Activated CD4-positive, alpha-beta T cell treated with anti-CD3 and anti-CD28 coated beads, Interleukin-2, amount 10 ng/mL, durations not matched to agents 24 days and 14 days (primary cell): ENCODE measurements at regions of chr7 and their contacts with region 1.

Region 1: DNA sequence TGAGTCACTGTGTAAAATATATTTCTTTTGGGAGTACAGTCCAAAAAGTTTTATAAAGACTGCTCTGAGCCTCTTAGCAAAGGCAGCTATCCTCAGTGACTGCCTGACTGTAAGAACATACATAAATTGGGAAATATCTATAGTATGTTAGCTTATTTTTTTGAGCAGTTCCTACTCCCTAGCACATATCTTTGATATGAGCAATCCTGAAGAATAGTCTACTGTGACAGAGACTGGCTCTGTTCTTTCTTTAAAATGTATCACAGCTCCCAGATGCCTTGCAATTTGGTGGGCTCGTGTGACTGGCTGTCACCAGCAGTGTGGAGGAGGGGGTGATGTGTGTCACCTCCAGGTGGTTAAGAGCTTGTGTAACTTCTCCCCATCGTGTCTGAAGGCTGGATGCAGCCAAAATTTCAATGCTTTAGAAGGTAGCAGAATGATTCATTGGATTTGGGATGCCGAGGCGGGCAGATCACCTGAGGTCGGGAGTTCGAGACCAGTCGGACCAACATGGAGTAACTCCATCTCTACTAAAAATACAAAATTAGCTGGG is 47.9 kb downstream of the MTERF1 start:
- DNase-seq: no peak
- H3K4me3 Mint-ChIP-seq: no peak overlapping the region
- H3K27ac Mint-ChIP-seq: no peak overlapping the region
- H3K4me1 Mint-ChIP-seq: peaks cover 2% of the 10 kb centered on the region
- H3K27me3 Mint-ChIP-seq: no peaks in the 10 kb centered on the region

Region 2: DNA sequence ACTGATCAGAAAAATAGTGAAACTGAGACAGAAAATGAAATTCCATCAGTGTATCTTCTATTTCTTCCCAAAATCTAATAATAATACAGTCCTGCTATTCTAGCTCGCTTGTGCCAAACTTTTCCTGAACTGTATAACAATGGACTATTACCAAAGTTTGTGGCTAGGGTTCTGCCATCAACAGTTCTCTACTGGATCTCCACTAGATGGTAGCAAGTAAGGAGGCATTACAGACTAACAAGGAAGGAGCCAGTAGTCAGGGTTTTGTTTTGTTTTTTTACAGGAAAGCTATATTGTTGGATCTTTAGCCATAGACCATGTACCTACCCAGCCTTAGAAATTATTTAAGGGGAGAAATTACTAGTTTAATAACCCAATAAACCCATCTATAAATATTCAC is 37.1 kb after region 1 on chr7:
- intact Hi-C with region 1: no loop called
- DNase-seq: no peak
- H3K4me3 Mint-ChIP-seq: no peak overlapping the region
- H3K27ac Mint-ChIP-seq: no peak overlapping the region
- H3K4me1 Mint-ChIP-seq: no peaks in the 10 kb centered on the region
- H3K27me3 Mint-ChIP-seq: no peaks in the 10 kb centered on the region

Region 3: DNA sequence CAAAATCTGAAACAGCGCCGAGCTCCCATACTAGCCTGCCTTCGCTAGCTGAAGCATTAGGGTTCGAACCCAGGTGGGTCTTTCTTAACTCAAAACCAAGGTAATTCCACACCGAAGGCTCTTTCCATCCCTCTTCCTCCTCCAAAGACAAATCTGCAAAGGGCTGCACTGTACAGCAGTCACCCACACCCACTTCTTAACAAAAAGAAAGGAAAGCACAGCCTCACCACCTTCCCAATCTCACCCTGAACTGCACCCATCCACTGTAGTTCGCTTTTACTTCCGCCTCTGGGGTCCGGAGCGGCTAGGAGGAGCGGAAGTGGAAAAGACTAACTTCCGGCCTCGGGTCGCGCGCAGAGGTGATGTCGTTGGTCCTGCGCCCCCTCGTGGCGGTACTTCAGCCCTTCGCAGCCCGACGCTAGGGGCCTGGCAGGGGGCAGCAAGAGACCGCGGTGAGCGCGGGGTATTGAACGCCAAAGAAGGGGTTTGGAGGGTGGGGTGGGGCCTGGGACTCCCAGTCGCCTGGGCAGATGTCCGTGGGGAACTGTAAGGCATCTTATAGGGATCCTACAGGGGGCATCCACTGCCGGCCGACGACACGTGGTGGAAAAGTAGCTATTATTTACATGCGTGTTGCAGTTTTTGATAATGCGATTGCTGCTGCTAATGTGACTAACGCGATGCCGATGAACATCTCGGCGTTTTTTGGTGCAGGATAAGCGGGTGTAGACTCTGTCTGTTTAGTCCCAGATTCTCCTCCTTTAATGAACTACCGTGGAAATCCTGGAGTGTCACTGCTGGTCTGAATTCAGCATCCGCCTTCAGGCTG is 48.1 kb after region 1 on chr7 and contains the start of gene MTERF1:
- intact Hi-C with region 1: loop called (anchors 5 kb)
- DNase-seq: peak; percentile 97
- H3K4me3 Mint-ChIP-seq: peak within 1 kb of the TSS; percentile 90
- H3K27ac Mint-ChIP-seq: peak within 1 kb of the TSS; percentile 90
- H3K4me1 Mint-ChIP-seq: peaks cover 27% of the 10 kb centered on the region
- H3K27me3 Mint-ChIP-seq: no peaks in the 10 kb centered on the region
- total RNA-seq, gene MTERF1: 19.5 and 20.9 TPM in 2 replicates